Gastrocnemius medialis (tissue), 4 donors: ENCODE measurements at regions of chr20 and their contacts with region 1.

Region 1: DNA sequence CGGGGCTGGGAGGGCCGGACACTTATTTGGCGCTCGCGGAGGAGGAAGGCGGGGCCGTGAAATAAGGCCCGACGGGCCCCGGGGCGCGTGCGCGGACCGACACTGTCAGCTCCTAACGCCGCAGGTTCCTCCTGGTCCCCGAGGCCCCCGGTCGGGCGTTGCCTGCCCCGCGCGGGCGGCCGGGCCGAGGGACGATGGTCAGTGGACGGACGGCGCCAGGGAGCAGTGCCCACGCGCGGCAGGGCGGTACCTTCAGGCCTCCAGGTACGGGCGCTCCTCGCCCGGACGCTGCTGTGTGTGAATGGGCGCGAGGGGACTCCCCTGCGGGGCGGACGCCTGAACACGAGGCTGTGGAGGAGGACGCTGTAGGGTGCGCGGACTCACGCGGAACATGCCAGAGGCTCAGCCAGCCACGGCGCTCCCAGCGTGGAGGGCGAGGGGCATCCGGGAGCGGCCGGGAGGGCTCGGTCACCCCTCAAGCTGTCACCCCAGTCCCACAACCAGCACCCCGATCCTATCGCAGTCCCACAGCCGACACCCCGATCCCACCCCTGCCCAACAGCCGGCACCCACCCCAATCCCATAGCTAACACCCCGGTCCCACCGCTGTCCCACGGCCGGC is 339 bp upstream of the GMEB2 start:
- DNase-seq: peak; percentile 90 to 94
- ATAC-seq: peak; percentile 91 to 92
- H3K4me3 ChIP-seq: peak overlapping the region; percentile 67 to 99 (median 84)
- H3K27ac ChIP-seq: peak overlapping the region; percentile 90 to 99 (median 96)
- H3K4me1 ChIP-seq: peaks cover 16 to 23% of the 10 kb centered on the region in 2 donors
- H3K27me3 ChIP-seq: no peaks in the 10 kb centered on the region
- CTCF ChIP-seq: no peak
- POLR2A ChIP-seq: peak; percentile 79

Region 2: GRCh38 chr20:63216041-63216848 is 411.0 kb before region 1 on chr20 and contains the start of gene YTHDF1:
- in situ Hi-C with region 1: no loop called
- intact Hi-C with region 1: loop called (anchors 5 kb)
- DNase-seq: peak; percentile 93 to 96
- ATAC-seq: peak; percentile 94 to 97
- H3K4me3 ChIP-seq: peak within 1 kb of the TSS; percentile 77 to 95 (median 86)
- H3K27ac ChIP-seq: peak within 1 kb of the TSS; percentile 85 to 96 (median 92)
- H3K4me1 ChIP-seq: peaks cover 35 to 38% of the 10 kb centered on the region in 2 donors
- H3K27me3 ChIP-seq: no peaks in the 10 kb centered on the region
- CTCF ChIP-seq: no peak
- POLR2A ChIP-seq: peak; percentile 75 to 88
- total RNA-seq, gene YTHDF1: 37.1 to 45.7 (median 40.4) TPM

Region 3: GRCh38 chr20:63641792-63642544 is 14.7 kb after region 1 on chr20:
- in situ Hi-C with region 1: no loop called
- intact Hi-C with region 1: loop called (anchors 1 kb)
- DNase-seq: peak; percentile 82 to 83
- ATAC-seq: peak; percentile 80 to 82
- H3K4me3 ChIP-seq: peak overlapping the region; percentile 60 to 70 (median 62)
- H3K27ac ChIP-seq: peak overlapping the region; percentile 72 to 78 (median 76)
- H3K4me1 ChIP-seq: peaks cover 9 to 10% of the 10 kb centered on the region in 2 donors
- H3K27me3 ChIP-seq: no peaks in the 10 kb centered on the region
- CTCF ChIP-seq: peak in 4 of 5 experiments; percentile 39 to 67 (median 48)
- POLR2A ChIP-seq: no peak

Region 4: GRCh38 chr20:63673951-63674350 is 46.7 kb after region 1 on chr20:
- in situ Hi-C with region 1: no loop called
- intact Hi-C with region 1: no loop called
- DNase-seq: no peak
- ATAC-seq: no peak
- H3K4me3 ChIP-seq: no peak overlapping the region
- H3K27ac ChIP-seq: no peak overlapping the region
- H3K4me1 ChIP-seq: no peaks in the 10 kb centered on the region
- H3K27me3 ChIP-seq: no peaks in the 10 kb centered on the region
- CTCF ChIP-seq: no peak
- POLR2A ChIP-seq: no peak

Region 5: DNA sequence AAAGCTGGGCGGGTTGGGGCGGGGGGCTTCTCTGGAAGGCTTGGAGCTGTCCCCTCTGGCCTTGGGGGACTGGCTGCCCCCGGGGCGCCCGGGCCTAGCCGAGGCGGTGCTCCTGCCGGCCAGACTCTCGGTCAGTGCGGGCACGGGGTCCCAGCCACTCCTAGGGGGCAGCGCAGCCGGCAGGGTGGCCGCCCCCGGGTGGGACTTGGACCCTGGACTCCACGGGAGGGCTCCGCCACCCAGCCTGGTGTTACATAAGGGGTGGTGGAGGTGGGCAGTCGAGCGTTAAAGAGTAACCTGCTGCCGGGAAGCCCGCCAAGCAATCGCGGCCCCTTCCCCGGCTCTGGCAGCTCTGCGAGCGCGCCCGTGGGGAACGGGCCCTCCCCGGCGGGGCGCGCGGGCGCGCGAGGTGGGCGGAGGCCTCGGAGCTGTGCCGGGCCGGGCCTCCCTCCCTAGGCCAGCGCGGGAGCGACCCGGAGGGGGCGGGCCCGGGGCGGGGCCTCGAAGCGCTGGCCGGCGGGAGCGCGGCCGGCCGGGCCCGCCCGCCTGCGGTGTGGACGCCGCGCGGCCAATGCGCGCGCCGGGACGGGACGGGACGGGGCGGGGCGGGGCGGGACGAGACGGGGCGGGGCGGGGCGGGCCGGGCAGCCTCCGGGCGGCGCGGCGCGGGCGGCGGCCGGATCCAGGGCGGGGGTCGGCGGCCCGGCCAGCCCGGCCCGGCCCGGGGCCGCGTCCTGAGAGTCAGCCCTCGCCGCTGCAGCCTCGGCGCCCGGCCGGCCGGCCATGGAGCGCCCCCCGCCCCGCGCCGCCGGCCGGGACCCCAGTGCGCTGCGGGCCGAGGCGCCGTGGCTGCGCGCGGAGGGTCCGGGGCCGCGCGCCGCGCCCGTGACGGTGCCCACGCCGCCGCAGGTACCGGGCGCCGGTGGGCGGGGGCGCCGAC is 112.2 kb after region 1 on chr20 and contains the start of gene SLC2A4RG:
- in situ Hi-C with region 1: no loop called
- intact Hi-C with region 1: loop called (anchors 2 kb)
- DNase-seq: peak; percentile 54 to 72
- ATAC-seq: peak; percentile 59 to 67
- H3K4me3 ChIP-seq: peak within 1 kb of the TSS; percentile 58 to 91 (median 74)
- H3K27ac ChIP-seq: peak within 1 kb of the TSS; percentile 95 to 99 (median 97)
- H3K4me1 ChIP-seq: peaks cover 17 to 32% of the 10 kb centered on the region in 2 donors
- H3K27me3 ChIP-seq: no peaks in the 10 kb centered on the region
- CTCF ChIP-seq: no peak
- POLR2A ChIP-seq: peak; percentile 32 to 33
- total RNA-seq, gene SLC2A4RG: 26.0 to 58.7 (median 39.1) TPM

Region 6: GRCh38 chr20:63980806-63981728 is 353.8 kb after region 1 on chr20 and contains the start of gene PRPF6:
- in situ Hi-C with region 1: no loop called
- intact Hi-C with region 1: loop called (anchors 5 kb)
- DNase-seq: peak; percentile 90
- ATAC-seq: peak; percentile 93 to 94
- H3K4me3 ChIP-seq: peak within 1 kb of the TSS; percentile 90 to 100 (median 98)
- H3K27ac ChIP-seq: peak within 1 kb of the TSS; percentile 75 to 88 (median 82)
- H3K4me1 ChIP-seq: peaks cover 22 to 28% of the 10 kb centered on the region in 2 donors
- H3K27me3 ChIP-seq: peaks cover 0 to 17% (median 7%) of the 10 kb centered on the region in 3 donors
- CTCF ChIP-seq: peak; percentile 61 to 81 (median 76)
- POLR2A ChIP-seq: peak; percentile 28 to 76
- total RNA-seq, gene PRPF6: 39.3 to 68.4 (median 47.7) TPM